CD4-positive, alpha-beta memory T cell (primary cell): ENCODE measurements at regions of chr15 and their contacts with region 1.

Region 1: DNA sequence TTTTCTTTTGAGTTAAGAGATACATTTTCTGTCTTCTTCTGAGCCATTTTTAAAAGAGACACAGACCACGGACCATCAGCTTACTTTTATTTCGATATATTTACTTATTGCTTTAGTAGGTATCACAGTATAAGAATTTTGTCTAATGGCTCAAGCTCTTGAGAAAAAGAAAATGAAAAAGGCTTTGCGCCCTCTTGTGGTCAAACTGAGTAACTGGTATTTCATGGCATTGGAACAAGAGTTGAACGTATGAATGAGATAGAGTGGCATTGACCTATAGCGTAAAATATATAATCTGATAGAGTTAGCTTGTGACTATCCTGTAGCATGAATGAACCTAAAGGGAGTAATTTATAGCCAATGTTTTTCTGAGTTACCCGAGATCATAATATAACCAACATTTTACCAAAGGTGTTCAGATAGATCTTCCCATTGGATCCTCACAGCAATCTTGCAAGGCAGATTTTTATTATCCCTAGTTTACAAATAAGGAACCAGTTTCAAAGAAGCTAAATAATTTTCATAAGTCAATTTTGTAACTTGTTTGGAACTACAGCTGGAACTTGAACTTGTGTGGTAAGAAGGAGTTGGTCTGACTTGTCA is 154.6 kb downstream of the POLR2M start:
- DNase-seq: peak in 4 of 5 donors; percentile 37 to 56 (median 41)
- H3K4me3 ChIP-seq: no peak overlapping the region
- H3K4me3 Mint-ChIP-seq: no peak overlapping the region
- H3K27ac ChIP-seq: no peak overlapping the region
- H3K27ac Mint-ChIP-seq: no peak overlapping the region
- H3K4me1 ChIP-seq: no peaks in the 10 kb centered on the region
- H3K4me1 Mint-ChIP-seq: peaks cover 0 to 4% (median 2%) of the 10 kb centered on the region in 4 donors
- H3K27me3 ChIP-seq: no peaks in the 10 kb centered on the region
- H3K27me3 Mint-ChIP-seq: peaks cover 8 to 12% of the 10 kb centered on the region in 2 donors

Region 2: GRCh38 chr15:57340682-57341259 is 520.4 kb before region 1 on chr15:
- CTCF ChIA-PET with region 1: interaction called, 4 read pairs
- POLR2A ChIA-PET with region 1: no interaction called
- intact Hi-C with region 1: loop called (anchors 2 kb)
- DNase-seq: peak in 4 of 5 donors; percentile 7 to 12 (median 8)
- H3K4me3 ChIP-seq: no peak overlapping the region
- H3K4me3 Mint-ChIP-seq: no peak overlapping the region
- H3K27ac ChIP-seq: no peak overlapping the region
- H3K27ac Mint-ChIP-seq: no peak overlapping the region
- H3K4me1 ChIP-seq: no peaks in the 10 kb centered on the region
- H3K4me1 Mint-ChIP-seq: peaks cover 0 to 2% (median 0%) of the 10 kb centered on the region in 4 donors
- H3K27me3 ChIP-seq: no peaks in the 10 kb centered on the region
- H3K27me3 Mint-ChIP-seq: peaks cover 12 to 21% of the 10 kb centered on the region in 2 donors

Region 3: DNA sequence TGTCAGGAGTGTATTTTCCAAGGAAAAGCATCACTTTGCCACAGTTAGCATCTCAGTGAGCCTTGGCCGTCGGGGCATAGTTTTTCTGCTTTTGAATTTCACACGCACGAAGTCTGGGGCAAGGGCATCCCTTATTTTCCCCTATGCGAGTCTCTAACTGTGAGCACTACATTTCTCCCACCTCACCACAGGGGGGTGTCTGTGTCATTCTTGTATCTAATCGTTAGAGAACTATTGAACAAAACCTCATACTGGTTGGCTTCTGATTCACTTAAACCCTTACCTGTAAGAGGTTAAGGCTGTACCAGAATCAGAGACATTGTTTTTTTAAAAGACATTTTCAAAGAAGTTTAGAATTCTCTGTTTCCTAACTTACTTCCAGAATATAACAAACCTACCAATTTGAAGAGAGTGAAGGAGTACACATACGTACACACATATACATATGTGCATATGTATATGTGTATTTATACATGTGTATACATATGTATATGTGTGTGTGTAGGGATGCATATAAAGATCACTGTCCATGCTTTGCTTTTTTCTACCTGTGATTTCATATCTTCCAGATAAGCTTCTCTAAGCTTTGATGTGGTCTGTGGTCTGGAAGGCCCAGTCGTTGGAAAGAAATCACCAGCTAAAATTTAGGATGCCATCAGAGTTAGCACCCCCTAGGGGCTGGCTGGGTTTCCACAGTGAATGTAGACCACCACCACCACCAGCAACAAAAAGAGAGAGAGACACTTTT is 220.0 kb before region 1 on chr15:
- CTCF ChIA-PET with region 1: interaction called, 10 read pairs
- POLR2A ChIA-PET with region 1: no interaction called
- intact Hi-C with region 1: loop called (anchors 1 kb)
- DNase-seq: peak in 2 of 5 donors; percentile 4 to 15
- H3K4me3 ChIP-seq: no peak overlapping the region
- H3K4me3 Mint-ChIP-seq: no peak overlapping the region
- H3K27ac ChIP-seq: no peak overlapping the region
- H3K27ac Mint-ChIP-seq: no peak overlapping the region
- H3K4me1 ChIP-seq: no peaks in the 10 kb centered on the region
- H3K4me1 Mint-ChIP-seq: peaks cover 2 to 9% (median 6%) of the 10 kb centered on the region in 4 donors
- H3K27me3 ChIP-seq: no peaks in the 10 kb centered on the region
- H3K27me3 Mint-ChIP-seq: peaks cover 1 to 5% of the 10 kb centered on the region in 2 donors

Region 4: GRCh38 chr15:57732526-57733331 is 128.4 kb before region 1 on chr15:
- CTCF ChIA-PET with region 1: interaction called, 28 read pairs
- POLR2A ChIA-PET with region 1: no interaction called
- intact Hi-C with region 1: loop called (anchors 5 kb)
- DNase-seq: peak in 4 of 5 donors; percentile 14 to 29 (median 24)
- H3K4me3 ChIP-seq: no peak overlapping the region
- H3K4me3 Mint-ChIP-seq: no peak overlapping the region
- H3K27ac ChIP-seq: no peak overlapping the region
- H3K27ac Mint-ChIP-seq: peak overlapping the region in 1 of 7 donors; percentile 4
- H3K4me1 ChIP-seq: no peaks in the 10 kb centered on the region
- H3K4me1 Mint-ChIP-seq: peaks cover 0 to 7% (median 3%) of the 10 kb centered on the region in 4 donors
- H3K27me3 ChIP-seq: no peaks in the 10 kb centered on the region
- H3K27me3 Mint-ChIP-seq: no peaks in the 10 kb centered on the region

Region 5: DNA sequence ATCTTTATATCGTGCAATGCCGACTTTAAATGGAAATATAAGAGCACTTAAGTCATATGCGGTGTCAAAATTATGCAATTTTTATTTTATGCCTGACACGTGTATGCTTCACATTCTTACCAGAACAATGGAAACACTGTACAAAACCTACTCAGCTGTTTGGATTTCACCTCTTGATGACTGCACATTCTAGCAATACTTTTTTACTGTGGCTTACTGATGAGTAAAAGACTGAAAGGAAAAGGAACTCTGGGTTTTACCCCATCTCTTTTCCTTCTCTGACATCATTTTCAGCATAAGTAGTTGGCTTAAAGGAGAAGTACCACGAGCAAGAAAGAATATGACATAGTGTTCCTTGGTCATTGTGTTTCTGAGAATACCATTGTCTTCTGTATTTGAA is 11.8 kb before region 1 on chr15:
- CTCF ChIA-PET with region 1: interaction called, 39 read pairs
- POLR2A ChIA-PET with region 1: no interaction called
- intact Hi-C with region 1: no loop called
- DNase-seq: no peak
- H3K4me3 ChIP-seq: no peak overlapping the region
- H3K4me3 Mint-ChIP-seq: no peak overlapping the region
- H3K27ac ChIP-seq: no peak overlapping the region
- H3K27ac Mint-ChIP-seq: no peak overlapping the region
- H3K4me1 ChIP-seq: no peaks in the 10 kb centered on the region
- H3K4me1 Mint-ChIP-seq: no peaks in the 10 kb centered on the region
- H3K27me3 ChIP-seq: no peaks in the 10 kb centered on the region
- H3K27me3 Mint-ChIP-seq: peaks cover 32 to 35% of the 10 kb centered on the region in 2 donors